Astrocyte of the spinal cord (primary cell): ENCODE measurements at regions of chr1 and their contacts with region 1.

Region 1: GRCh38 chr1:224513787-224514209 is 79.2 kb upstream of the WDR26 start:
- DNase-seq: peak; percentile 79
- H3K4me3 ChIP-seq: no peak overlapping the region
- CTCF ChIP-seq: peak; percentile 81

Region 2: DNA sequence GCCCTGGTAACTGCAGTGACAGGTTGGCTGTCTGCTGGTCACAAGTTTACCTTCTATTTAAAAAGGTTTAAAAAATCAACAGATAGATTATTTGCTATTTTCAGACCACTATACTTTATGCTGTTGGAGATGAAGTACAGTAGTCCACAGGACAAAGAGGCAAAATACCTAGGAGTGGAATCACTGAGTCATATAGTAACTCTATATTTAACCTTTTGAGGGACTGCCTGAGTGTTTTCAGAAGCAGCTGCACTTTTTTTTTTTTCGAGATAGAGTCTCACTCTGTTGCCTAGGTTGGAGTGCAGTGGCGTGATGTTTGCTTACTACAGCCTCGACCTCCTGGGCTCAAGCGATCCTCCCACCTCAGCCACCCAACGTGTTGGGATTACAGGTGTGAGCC is 145.4 kb before region 1 on chr1:
- in situ Hi-C with region 1: no loop called
- DNase-seq: no peak
- H3K4me3 ChIP-seq: no peak overlapping the region
- CTCF ChIP-seq: no peak

Region 3: DNA sequence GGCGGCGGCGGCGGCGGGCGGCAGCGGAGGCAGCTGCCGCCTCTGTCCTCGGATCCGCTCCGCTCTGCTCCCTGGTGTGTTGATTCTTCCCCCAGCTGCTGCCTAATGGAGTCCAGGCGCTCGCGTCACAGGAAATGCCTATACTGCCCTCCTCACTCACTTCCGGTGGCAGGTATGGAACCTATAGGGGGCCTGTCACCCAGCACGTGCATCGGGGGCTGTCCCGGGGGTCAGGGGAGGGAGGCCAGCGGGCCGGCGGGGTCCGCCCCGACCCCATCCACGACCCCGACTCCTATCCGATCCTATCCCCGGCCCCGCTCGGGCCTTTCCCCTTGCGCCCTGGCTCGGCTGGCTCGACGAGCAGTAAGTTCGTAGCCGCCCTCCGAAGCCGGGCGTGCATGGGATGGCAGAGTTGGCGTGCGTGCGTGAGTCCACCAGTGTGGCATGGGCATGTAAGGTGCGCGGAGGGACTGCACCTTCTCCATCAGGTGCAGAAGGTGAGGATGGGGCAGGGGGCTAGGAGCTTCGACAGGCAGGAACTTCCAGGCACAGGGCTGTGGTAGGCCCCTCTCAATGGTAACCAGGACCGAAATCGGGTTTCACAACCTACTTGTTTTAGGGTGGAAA is 79.0 kb before region 1 on chr1 and contains the start of gene WDR26:
- in situ Hi-C with region 1: no loop called
- DNase-seq: peak; percentile 74
- H3K4me3 ChIP-seq: peak within 1 kb of the TSS; percentile 87
- CTCF ChIP-seq: peak; percentile 8

Region 4: DNA sequence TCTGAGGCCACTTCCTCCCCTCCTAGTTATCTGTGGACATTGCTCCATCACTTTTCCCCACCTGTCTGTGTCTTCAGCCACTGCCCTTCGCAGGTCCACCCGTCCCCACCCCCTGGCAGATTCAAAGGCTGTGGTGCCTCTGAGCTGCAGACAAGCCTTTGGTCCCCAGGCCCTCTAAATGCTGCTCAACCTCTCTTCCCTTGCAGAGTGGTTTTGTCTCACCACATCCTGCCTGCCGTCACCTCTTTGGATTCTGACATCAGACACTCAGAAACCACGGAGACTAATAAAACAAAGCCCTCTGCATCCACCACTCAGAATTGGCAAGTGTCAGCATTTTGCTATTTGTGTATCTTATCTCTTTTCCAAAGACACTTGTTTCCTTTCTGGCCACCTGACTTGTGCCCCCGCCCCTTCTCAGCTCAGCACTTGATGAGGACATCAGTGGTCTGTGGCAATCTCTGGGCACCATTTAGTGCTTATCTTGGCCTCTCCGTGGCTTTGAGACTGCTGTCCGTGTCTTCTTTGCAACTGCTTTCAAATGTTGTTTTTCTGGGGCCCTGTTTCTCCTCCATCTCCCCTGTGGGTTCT is 110.0 kb after region 1 on chr1:
- in situ Hi-C with region 1: loop called (anchors 25 kb)
- DNase-seq: peak; percentile 96
- H3K4me3 ChIP-seq: no peak overlapping the region
- CTCF ChIP-seq: no peak

Region 5: DNA sequence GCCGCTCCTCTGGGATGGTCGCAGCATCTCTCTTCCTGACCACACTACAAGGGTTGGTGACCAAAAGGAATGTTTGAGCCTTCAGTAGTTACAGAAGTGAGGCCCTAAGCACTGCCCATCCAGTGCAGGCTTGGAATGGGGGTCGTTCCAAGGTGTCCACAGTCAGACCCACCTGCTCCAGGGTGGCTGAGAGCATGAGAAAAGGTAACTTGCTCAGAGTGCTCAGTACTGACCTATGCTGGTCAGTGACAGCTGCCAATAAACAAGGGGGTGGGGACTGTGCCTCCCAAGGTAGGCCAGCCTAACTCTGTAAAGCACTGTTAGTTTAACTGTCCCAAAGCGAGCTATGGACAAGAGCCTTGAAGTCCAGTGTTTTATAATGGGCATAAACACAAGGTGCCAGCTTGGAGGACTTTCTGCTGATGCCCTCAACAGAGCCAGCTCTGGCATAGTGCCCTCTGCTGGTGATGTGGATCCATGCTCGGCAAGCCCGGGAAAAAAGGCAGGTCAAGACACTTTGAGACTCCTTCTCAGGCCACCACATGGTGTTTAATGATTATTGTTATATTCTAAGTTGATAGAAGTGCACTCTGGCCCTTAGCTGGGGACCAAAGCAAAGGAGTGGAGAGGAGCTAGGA is 337.5 kb after region 1 on chr1:
- in situ Hi-C with region 1: loop called (anchors 25 kb)
- DNase-seq: peak; percentile 34
- H3K4me3 ChIP-seq: no peak overlapping the region
- CTCF ChIP-seq: peak; percentile 85